Thyroid gland (tissue), 4 donors: ENCODE measurements at regions of chr15 and their contacts with region 1.

Region 1: GRCh38 chr15:33086507-33087121 is 107.9 kb downstream of the FMN1 start:
- DNase-seq: no peak
- H3K4me3 ChIP-seq: no peak overlapping the region
- H3K27ac ChIP-seq: no peak overlapping the region
- H3K4me1 ChIP-seq: no peaks in the 10 kb centered on the region
- H3K27me3 ChIP-seq: no peaks in the 10 kb centered on the region
- CTCF ChIP-seq: peak in 5 of 6 experiments; percentile 28 to 66 (median 53)
- POLR2A ChIP-seq: no peak

Region 2: DNA sequence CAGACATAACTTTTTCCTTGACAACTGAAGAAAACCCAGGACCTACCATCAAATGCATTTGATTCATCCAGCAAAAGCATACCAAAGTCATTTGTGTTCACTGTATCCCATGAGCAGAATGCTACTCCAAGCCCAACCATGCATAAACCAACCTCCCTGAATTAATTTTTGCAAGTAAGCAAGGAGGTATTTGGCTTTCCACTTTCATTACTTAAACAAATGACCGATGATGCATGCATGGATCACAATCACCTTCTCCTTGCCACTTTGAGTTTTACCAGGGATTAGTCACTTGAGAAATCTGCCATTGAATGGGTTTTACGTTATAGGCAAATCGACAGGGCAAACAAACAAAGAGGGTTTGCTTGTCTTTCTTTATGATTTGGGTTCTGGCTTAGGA is 106.9 kb before region 1 on chr15:
- intact Hi-C with region 1: no loop called
- DNase-seq: no peak
- H3K4me3 ChIP-seq: no peak overlapping the region
- H3K27ac ChIP-seq: peak overlapping the region in 1 of 3 donors; percentile 7
- H3K4me1 ChIP-seq: peaks cover 6 to 8% of the 10 kb centered on the region in 2 donors
- H3K27me3 ChIP-seq: no peaks in the 10 kb centered on the region
- CTCF ChIP-seq: no peak
- POLR2A ChIP-seq: no peak

Region 3: GRCh38 chr15:33126559-33127290 is 40.1 kb after region 1 on chr15:
- intact Hi-C with region 1: loop called (anchors 5 kb)
- DNase-seq: peak; percentile 69 to 76
- H3K4me3 ChIP-seq: no peak overlapping the region
- H3K27ac ChIP-seq: no peak overlapping the region
- H3K4me1 ChIP-seq: peaks cover 0 to 12% of the 10 kb centered on the region in 2 donors
- H3K27me3 ChIP-seq: no peaks in the 10 kb centered on the region
- CTCF ChIP-seq: no peak
- POLR2A ChIP-seq: no peak